OCI-LY7 (cell line): ENCODE measurements at regions of chr22 and their contacts with region 1.

Region 1: GRCh38 chr22:50469377-50470305 is 5.2 kb downstream of the SBF1 start:
- DNase-seq: peak; percentile 98
- H3K4me3 ChIP-seq: peak overlapping the region; percentile 96
- H3K27ac ChIP-seq: peak overlapping the region; percentile 95
- H3K4me1 ChIP-seq: peaks cover 68% of the 10 kb centered on the region
- CTCF ChIP-seq: 0 out of 2 replicates have a peak, but pooled peaks have one; percentile 21

Region 2: DNA sequence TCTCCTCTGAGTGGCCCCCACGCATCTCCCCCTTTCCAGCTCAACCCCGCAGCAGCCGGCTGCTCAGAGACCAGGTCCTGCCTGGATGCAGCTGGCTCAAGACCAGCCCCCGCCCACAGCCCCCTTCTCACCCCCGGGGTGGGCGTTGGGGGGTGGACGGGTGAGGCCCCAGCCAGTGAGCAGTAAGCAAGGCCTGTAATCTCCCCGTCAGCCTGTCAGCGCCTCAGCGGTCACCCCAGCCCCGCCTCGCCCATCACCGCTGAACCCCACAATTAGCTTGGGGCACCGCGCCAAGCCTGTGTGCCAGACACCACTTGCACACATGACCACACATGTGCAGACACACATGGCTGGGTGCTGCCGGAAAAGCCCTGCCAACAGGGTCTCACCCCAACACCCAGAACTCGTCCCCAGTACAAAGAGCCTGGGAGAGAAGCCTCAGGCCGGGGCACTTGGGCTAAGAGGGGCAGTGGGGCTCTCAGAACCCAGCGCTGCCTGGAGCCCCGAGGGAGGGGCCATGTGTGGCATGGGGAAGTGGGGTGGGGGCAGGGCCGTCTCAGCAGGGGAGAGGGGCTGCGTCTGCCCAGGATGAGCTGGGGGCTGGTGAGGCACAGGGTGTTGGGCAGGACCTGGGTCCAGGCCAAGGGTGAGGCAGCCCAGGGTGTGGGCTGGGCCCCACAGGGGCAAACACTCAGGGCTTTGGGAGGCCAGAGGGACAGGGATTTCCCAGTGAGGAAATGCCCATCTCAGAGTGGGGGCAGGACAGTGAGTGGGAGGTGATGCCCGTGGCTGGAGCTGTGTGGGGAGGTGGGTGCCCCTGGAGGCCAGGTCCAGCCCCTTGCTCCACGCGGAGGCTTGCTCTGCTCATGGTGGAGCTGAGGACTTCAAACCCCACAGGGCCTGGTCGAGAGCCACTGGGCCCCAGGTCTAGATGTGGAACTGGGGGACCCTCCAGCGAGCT is 167.8 kb before region 1 on chr22:
- CTCF ChIA-PET with region 1: no interaction called
- POLR2A ChIA-PET with region 1: no interaction called
- intact Hi-C with region 1: no loop called
- DNase-seq: no peak
- H3K4me3 ChIP-seq: no peak overlapping the region
- H3K27ac ChIP-seq: no peak overlapping the region
- H3K4me1 ChIP-seq: peaks cover 75% of the 10 kb centered on the region
- CTCF ChIP-seq: no peak

Region 3: GRCh38 chr22:50444663-50445062 is 25.0 kb before region 1 on chr22:
- CTCF ChIA-PET with region 1: no interaction called
- POLR2A ChIA-PET with region 1: interaction called, 4 read pairs
- intact Hi-C with region 1: loop called (anchors 1 kb)
- DNase-seq: no peak
- H3K4me3 ChIP-seq: no peak overlapping the region
- H3K27ac ChIP-seq: peak overlapping the region; percentile 72
- H3K4me1 ChIP-seq: peaks cover 33% of the 10 kb centered on the region
- CTCF ChIP-seq: no peak

Region 4: GRCh38 chr22:50452649-50453048 is 17.0 kb before region 1 on chr22:
- CTCF ChIA-PET with region 1: interaction called, 4 read pairs
- POLR2A ChIA-PET with region 1: interaction called, 10 read pairs
- intact Hi-C with region 1: loop called (anchors 1 kb)
- DNase-seq: no peak
- H3K4me3 ChIP-seq: no peak overlapping the region
- H3K27ac ChIP-seq: no peak overlapping the region
- H3K4me1 ChIP-seq: peaks cover 26% of the 10 kb centered on the region
- CTCF ChIP-seq: no peak

Region 5: GRCh38 chr22:50606165-50606945 is 136.7 kb after region 1 on chr22:
- CTCF ChIA-PET with region 1: no interaction called
- POLR2A ChIA-PET with region 1: no interaction called
- intact Hi-C with region 1: no loop called
- DNase-seq: no peak
- H3K4me3 ChIP-seq: no peak overlapping the region
- H3K27ac ChIP-seq: no peak overlapping the region
- H3K4me1 ChIP-seq: no peaks in the 10 kb centered on the region
- CTCF ChIP-seq: peak; percentile 35; the same call in 1 of the 2 replicates

Region 6: DNA sequence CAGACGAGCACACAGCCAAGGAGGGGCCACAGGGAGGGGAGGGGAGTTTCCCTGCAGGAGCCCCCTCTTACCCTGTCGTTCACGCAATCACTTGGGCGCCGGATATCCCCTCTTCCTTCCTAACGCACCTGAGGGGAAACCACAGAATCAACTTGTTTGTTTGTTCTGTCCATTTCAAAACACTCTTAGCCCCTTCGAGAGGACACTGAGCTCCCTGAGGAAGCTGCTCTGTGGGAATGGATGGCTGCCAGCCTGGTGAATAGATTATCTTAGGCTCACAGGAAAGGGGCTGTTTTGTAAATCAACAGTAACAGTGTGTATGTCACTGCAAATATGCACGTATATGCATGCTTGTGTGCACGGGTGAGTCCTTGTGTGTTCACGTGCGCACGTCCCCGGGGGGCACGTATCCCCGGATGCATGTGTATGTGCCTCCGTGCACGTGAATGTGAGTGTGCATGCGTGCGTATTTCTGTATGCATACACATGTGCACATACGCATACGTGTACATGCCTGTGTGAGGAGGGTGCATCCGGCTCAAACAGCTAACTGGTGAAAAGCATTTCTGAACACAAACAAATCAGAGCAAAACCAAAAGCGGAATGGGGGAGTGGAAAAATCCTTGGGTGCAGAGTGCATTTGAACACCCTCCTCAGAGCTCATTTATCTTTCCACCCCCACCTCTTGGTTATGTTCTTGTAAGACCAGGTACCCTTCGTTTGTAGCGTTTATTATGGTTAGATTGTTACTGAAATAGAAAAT is 151.1 kb after region 1 on chr22:
- CTCF ChIA-PET with region 1: interaction called, 7 read pairs
- POLR2A ChIA-PET with region 1: interaction called, 7 read pairs
- intact Hi-C with region 1: loop called (anchors 1 kb)
- DNase-seq: peak; percentile 92
- H3K4me3 ChIP-seq: peak overlapping the region; percentile 67
- H3K27ac ChIP-seq: peak overlapping the region; percentile 82
- H3K4me1 ChIP-seq: peaks cover 37% of the 10 kb centered on the region
- CTCF ChIP-seq: no peak; the same call in 1 of the 2 replicates

Region 7: GRCh38 chr22:50627642-50628542 is 158.3 kb after region 1 on chr22 and contains the start of gene ARSA:
- CTCF ChIA-PET with region 1: no interaction called
- POLR2A ChIA-PET with region 1: no interaction called
- intact Hi-C with region 1: loop called (anchors 2 kb)
- DNase-seq: peak; percentile 90
- H3K4me3 ChIP-seq: peak within 1 kb of the TSS; percentile 93
- H3K27ac ChIP-seq: no peak within 1 kb of the TSS
- H3K4me1 ChIP-seq: peaks cover 10% of the 10 kb centered on the region
- CTCF ChIP-seq: peak; percentile 55
- total RNA-seq, gene ARSA: 20.1 and 31.6 TPM in 2 replicates